Left cardiac atrium (tissue), 4 donors: ENCODE measurements at regions of chr10 and their contacts with region 1.

Region 1: GRCh38 chr10:79374312-79375191 is 27.3 kb downstream of the PPIF start:
- DNase-seq: peak; percentile 85
- ATAC-seq: peak; percentile 60 to 69

Region 2: GRCh38 chr10:79066411-79067240 is 307.9 kb before region 1 on chr10:
- intact Hi-C with region 1: no loop called
- DNase-seq: no peak
- ATAC-seq: peak; percentile 3 to 9

Region 3: GRCh38 chr10:79242620-79243152 is 131.9 kb before region 1 on chr10:
- intact Hi-C with region 1: no loop called
- DNase-seq: peak; percentile 77
- ATAC-seq: peak; percentile 38

Region 4: GRCh38 chr10:79468024-79468560 is 93.5 kb after region 1 on chr10:
- intact Hi-C with region 1: loop called in 1 of 2 experiments (anchors 5 kb)
- DNase-seq: no peak
- ATAC-seq: peak; percentile 12 to 42

Region 5: DNA sequence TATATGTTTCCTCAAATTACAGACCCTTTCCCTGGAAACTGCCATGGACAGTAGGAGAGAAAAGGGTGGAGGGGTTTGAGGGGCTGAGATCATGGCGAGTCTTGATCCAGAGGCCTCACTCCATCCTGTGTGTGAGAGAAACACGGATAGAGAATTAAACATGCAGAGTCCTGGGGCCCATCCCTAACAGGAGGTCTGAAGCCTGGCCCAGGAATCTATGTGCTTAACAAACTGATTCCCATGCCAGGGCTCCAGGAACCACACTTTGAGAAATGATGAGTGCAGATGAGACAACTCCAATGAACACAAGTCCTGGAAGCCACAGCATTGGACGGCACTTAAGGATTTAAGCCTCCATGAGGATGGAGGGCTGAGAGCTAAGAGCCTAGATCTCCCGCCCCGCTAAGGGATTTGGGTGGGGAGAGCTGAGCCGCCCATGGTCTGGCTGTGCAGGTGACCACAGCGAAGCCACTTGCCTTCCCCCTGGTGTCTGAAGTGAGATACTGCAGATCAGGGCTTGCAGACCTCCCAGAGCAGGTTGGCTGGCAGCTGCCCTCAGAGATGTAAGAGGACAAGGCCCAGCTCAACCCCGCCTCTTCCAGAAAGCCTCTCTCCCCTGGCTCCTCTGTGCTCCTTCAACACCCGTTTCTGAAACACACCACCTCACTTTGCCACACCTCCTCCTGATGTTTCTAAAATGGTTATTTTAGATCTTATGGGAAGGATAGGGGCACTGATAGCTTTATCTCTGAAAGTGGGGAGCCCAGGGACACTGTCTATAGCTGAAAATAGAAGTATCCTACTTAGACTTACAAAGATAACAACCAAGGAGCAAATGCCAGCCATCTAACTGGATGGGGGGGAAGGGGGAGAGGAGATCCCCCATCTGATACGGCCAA is 113.0 kb after region 1 on chr10:
- intact Hi-C with region 1: loop called (anchors 1 to 5 kb)
- DNase-seq: peak; percentile 74
- ATAC-seq: peak; percentile 45 to 63